ENCODE measurements at regions of chrX and their contacts with region 1.

Region 1: DNA sequence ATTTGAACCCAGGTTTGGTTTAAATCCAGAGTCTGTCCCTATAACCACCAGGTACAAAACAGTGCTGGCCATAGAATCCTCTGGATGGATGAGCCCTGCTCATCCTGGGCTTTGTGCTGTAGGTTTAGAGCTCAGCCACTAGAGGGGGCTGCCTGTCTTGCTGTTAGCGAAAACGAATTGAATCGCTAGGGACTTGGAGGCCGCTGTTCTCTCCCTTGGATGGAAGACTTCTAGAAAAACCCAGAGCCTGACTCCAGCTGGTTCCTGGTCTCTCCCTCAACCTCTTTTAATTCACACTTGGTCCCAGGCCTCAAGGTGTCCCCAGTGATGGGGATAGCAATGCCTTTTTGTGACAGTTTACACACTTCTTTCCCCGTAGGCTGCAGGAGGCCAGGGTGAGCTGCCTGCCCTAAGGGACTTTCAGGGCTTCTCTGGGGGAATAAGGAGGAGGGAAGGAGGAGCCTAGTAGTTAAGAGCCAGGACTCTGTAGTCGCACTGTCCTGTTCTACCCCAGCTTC is 8.7 kb downstream of the RIPPLY1 start:
- DNase-seq: peak; percentile 63
- ATAC-seq: peak; percentile 79
- H3K4me3 ChIP-seq: peak overlapping the region in 1 of 2 experiments; percentile 30; a peak in 1 of 4 replicates
- H3K27ac ChIP-seq: peak overlapping the region; percentile 79
- H3K4me1 ChIP-seq: peaks cover 19 to 47% of the 10 kb centered on the region in 2 experiments
- H3K27me3 ChIP-seq: no peaks in the 10 kb centered on the region
- CTCF ChIP-seq: peak; percentile 74 to 79 (median 75)
- POLR2A ChIP-seq: no peak
- RAD21 ChIP-seq: peak; percentile 84

Region 2: GRCh38 chrX:106952988-106953387 is 58.5 kb after region 1 on chrX:
- CTCF ChIA-PET with region 1: interaction called, 4 read pairs
- POLR2A ChIA-PET with region 1: no interaction called
- RAD21 ChIA-PET with region 1: no interaction called
- intact Hi-C with region 1: loop called (anchors 1 kb)
- DNase-seq: no peak
- ATAC-seq: peak; percentile 47; the same call in 1 of the 2 replicates
- H3K4me3 ChIP-seq: no peak overlapping the region
- H3K27ac ChIP-seq: no peak overlapping the region
- H3K4me1 ChIP-seq: peaks cover 0 to 3% of the 10 kb centered on the region in 2 experiments; a peak in 3 of 4 replicates
- H3K27me3 ChIP-seq: no peaks in the 10 kb centered on the region
- CTCF ChIP-seq: peak in 2 of 3 experiments; percentile 47 to 56; a peak in 2 of 6 replicates
- POLR2A ChIP-seq: no peak
- RAD21 ChIP-seq: peak; percentile 63

Region 3: GRCh38 chrX:107025545-107025944 is 131.1 kb after region 1 on chrX:
- CTCF ChIA-PET with region 1: no interaction called
- POLR2A ChIA-PET with region 1: no interaction called
- RAD21 ChIA-PET with region 1: no interaction called
- intact Hi-C with region 1: loop called (anchors 10 kb)
- DNase-seq: peak; percentile 27
- ATAC-seq: peak; percentile 81
- H3K4me3 ChIP-seq: no peak overlapping the region
- H3K27ac ChIP-seq: no peak overlapping the region
- H3K4me1 ChIP-seq: no peaks in the 10 kb centered on the region
- H3K27me3 ChIP-seq: no peaks in the 10 kb centered on the region
- CTCF ChIP-seq: peak; percentile 54 to 69 (median 63); a peak in 5 of 6 replicates
- POLR2A ChIP-seq: no peak
- RAD21 ChIP-seq: peak; percentile 83

Region 4: GRCh38 chrX:107450823-107451509 is 556.5 kb after region 1 on chrX:
- CTCF ChIA-PET with region 1: no interaction called
- POLR2A ChIA-PET with region 1: no interaction called
- RAD21 ChIA-PET with region 1: no interaction called
- intact Hi-C with region 1: loop called (anchors 10 kb)
- DNase-seq: no peak
- ATAC-seq: peak; percentile 49
- H3K4me3 ChIP-seq: no peak overlapping the region
- H3K27ac ChIP-seq: no peak overlapping the region
- H3K4me1 ChIP-seq: peaks cover 10 to 20% of the 10 kb centered on the region in 2 experiments
- H3K27me3 ChIP-seq: no peaks in the 10 kb centered on the region
- CTCF ChIP-seq: peak in 2 of 3 experiments; percentile 44 to 45; a peak in 3 of 6 replicates
- POLR2A ChIP-seq: no peak
- RAD21 ChIP-seq: peak; percentile 36

Region 5: GRCh38 chrX:108070891-108071290 is 1176.4 kb after region 1 on chrX:
- CTCF ChIA-PET with region 1: no interaction called
- POLR2A ChIA-PET with region 1: no interaction called
- RAD21 ChIA-PET with region 1: no interaction called
- intact Hi-C with region 1: loop called (anchors 10 kb)
- DNase-seq: no peak
- ATAC-seq: peak; percentile 47; the same call in 1 of the 2 replicates
- H3K4me3 ChIP-seq: no peak overlapping the region
- H3K27ac ChIP-seq: no peak overlapping the region
- H3K4me1 ChIP-seq: peaks cover 0 to 6% of the 10 kb centered on the region in 2 experiments; a peak in 1 of 4 replicates
- H3K27me3 ChIP-seq: no peaks in the 10 kb centered on the region
- CTCF ChIP-seq: no peak
- POLR2A ChIP-seq: no peak
- RAD21 ChIP-seq: no peak

Measured in HCT116 (cell line).